Dorsolateral prefrontal cortex (tissue), 120 donors: ENCODE measurements at regions of chr16 and their contacts with region 1.

Region 1: GRCh38 chr16:5071681-5072333 is at the start of gene ALG1:
- DNase-seq: peak; percentile 83 to 94 (median 86)
- H3K4me3 ChIP-seq: peak within 1 kb of the TSS; percentile 54 to 95 (median 75)
- H3K27ac ChIP-seq: peak within 1 kb of the TSS; percentile 50 to 95 (median 89)
- H3K27me3 ChIP-seq: no peaks in the 10 kb centered on the region
- CTCF ChIP-seq: peak in 32 of 56 donors; percentile 4 to 53 (median 28)
- total RNA-seq, gene ALG1: 14.4 to 28.9 (median 21.0) TPM

Region 2: GRCh38 chr16:4538350-4539235 is 533.2 kb before region 1 on chr16 and contains the start of gene CDIP1:
- intact Hi-C with region 1: loop called in 1 of 2 experiments (anchors 10 kb)
- DNase-seq: peak; percentile 95 to 98 (median 97)
- H3K4me3 ChIP-seq: peak within 1 kb of the TSS; percentile 68 to 97 (median 90)
- H3K27ac ChIP-seq: peak within 1 kb of the TSS; percentile 85 to 99 (median 97)
- H3K27me3 ChIP-seq: no peaks in the 10 kb centered on the region
- CTCF ChIP-seq: peak in 35 of 56 donors; percentile 5 to 54 (median 22)
- total RNA-seq, gene CDIP1: 100 to 237 (median 186) TPM

Region 3: DNA sequence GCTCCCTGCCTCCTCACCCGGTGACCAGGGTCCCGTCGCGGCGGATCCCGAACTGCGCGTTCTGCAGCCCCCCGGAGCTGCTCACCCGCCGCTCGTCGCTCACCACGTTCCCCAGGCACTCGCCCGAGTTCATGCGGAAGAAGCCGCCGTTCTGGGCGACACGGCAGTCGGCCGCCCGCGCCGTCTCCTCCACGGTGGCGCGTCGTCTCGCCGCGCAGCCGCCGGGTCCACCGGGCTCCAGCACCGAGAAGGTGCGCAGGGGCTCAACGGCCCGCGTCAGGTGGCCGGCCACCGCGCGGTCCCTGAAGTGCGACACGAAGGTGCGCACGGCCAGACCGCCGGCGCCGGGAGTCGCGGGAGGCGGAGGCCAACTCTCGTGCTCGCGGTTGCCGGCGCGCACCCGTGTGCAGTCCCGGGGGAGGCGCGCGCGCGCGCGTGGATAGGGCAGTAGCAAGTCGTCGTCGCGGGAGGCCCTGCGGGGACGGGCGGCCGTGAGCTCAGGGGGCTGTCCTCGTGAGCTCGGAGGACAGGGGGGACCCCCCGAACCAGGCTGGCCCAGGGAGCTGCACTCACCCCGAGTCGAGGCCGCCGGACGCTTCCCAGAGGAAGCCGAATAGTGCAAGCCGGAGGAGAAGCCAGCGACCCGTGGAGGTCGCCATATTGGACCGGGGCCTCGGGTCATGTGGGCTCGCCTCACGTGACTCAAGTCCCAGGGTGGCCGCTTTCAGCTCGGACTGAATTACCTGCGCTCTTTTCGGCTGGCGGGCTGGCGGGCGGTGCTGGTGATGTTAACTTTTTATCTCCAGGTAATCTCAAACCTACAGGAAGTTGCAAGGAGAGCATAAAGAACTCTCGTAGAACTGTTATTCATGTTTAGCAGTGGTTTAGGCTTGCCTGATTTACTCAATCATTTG is 38.3 kb before region 1 on chr16 and contains the start of gene NAGPA:
- intact Hi-C with region 1: loop called (anchors 5 kb)
- DNase-seq: peak; percentile 92 to 97 (median 94)
- H3K4me3 ChIP-seq: peak within 1 kb of the TSS; percentile 38 to 97 (median 85)
- H3K27ac ChIP-seq: peak within 1 kb of the TSS in 58 of 59 donors; percentile 7 to 92 (median 80)
- H3K27me3 ChIP-seq: no peaks in the 10 kb centered on the region
- CTCF ChIP-seq: peak in 26 of 56 donors; percentile 6 to 50 (median 28)
- total RNA-seq, gene NAGPA: 29.1 to 81.0 (median 49.0) TPM